ENCODE measurements at regions of chr20 and their contacts with region 1.

Region 1: DNA sequence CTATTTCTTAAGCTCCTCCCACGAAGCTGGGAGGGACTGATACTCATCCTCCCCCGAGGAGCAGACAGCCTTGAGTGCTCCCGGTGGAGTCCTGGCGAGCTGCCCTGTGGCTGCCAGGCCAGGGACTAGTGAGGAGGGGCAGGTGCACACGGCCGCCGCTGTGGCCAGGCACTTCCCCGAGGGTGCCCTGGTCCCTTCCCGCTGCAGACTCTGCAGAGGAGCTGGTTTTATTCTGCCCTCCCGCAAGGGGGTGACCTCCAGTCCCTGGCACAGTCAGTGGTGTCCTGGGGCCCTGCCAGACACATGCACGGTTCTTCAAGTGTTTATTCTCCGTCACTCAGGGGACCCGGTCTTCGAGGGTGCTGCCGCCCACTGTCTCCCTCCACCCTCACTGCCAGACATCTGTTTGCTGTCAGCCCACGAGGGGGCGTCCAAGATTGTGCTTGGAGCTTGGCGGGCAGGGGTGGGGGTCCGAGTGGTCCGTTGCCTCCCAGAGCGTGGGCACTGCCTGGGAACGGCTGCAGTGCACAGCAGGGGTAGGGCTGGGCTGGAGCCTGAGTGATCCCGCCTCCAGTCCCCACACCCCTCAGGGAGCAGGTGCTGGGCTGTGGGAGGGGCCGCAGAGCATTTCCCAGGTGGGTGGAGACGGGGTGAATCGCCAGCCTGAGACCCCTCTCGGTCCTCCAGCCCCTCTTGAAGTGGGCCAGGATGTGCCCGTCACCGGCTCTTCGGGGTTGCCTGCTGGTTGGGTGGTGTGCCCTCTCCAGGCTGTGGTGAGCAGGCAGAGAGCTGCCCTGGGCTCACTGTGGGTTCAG is 3.1 kb upstream of the CABLES2 start:
- DNase-seq: peak; percentile 92
- H3K4me3 ChIP-seq: no peak overlapping the region; a peak in 1 of 4 replicates
- H3K27ac ChIP-seq: no peak overlapping the region; a peak in 1 of 4 replicates
- H3K4me1 ChIP-seq: peaks cover 0 to 44% of the 10 kb centered on the region in 2 experiments; a peak in 1 of 4 replicates
- H3K27me3 ChIP-seq: no peaks in the 10 kb centered on the region
- CTCF ChIP-seq: peak; percentile 64
- EP300 ChIP-seq: no peak
- RAD21 ChIP-seq: peak; percentile 70

Region 2: DNA sequence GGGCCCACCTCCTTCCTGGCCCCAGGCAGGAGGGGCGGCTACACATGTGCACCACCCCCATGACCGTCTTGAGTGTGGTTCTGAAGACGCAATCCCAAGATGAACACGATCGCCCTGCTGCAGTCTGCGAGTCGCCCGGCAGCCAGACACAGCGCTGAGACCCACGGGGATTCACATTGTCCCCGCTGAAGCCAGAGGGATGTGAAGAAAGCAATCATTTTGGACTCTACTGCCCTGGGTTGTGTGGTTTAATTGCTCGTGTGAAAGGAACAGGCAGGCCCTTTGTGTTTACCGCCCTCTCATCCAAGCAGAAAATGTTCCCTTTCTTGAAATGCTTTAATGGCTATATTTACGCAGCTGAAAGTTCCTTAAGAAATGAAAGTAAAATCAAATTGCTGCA is 623.9 kb before region 1 on chr20:
- CTCF ChIA-PET with region 1: no interaction called
- POLR2A ChIA-PET with region 1: no interaction called
- DNase-seq: no peak
- H3K4me3 ChIP-seq: no peak overlapping the region
- H3K27ac ChIP-seq: no peak overlapping the region
- H3K4me1 ChIP-seq: no peaks in the 10 kb centered on the region
- H3K27me3 ChIP-seq: no peaks in the 10 kb centered on the region
- CTCF ChIP-seq: no peak
- EP300 ChIP-seq: no peak
- RAD21 ChIP-seq: no peak

Region 3: DNA sequence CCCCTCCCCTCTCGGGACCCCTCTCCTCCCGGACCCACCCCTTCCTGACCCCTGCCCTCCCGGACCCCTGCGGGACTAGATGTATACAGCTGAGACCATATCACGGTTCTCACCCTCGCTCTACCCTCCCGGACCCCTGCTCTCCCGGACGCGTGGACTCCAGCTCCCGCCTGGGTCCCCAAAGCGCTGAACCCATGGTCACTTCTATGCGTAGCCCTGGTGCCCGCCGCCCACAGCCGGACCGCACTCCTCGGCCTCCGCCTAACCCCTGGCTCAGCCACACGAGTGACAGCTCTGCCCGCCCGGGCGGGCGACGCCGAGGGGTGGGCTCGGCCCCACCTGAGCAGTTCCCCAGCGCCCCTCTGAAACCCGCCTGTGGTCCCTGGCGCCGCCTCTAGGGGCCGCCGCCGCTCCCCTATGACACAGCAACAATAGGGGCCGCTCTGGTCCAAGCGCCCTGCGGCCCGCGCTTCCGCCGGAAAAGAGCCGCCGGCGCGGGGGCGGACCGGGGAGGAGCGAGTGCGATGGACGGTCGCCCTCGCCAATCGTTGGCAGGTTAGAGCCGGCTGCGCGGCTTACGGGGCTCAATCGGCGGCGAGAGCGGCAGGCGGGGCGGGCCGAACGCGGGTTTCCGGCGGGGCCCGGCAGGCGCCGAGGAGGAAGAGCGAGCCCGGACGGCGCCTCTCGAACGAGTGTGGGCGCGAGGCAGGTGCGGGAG is 107.6 kb before region 1 on chr20 and contains the start of gene ADRM1:
- CTCF ChIA-PET with region 1: interaction called, 10 read pairs
- POLR2A ChIA-PET with region 1: no interaction called
- DNase-seq: peak; percentile 99
- H3K4me3 ChIP-seq: peak within 1 kb of the TSS; percentile 96 to 97
- H3K27ac ChIP-seq: peak within 1 kb of the TSS; percentile 80 to 94
- H3K4me1 ChIP-seq: peaks cover 7 to 26% of the 10 kb centered on the region in 2 experiments; a peak in 2 of 4 replicates
- H3K27me3 ChIP-seq: no peaks in the 10 kb centered on the region
- CTCF ChIP-seq: peak; percentile 82
- EP300 ChIP-seq: peak in 1 of 2 experiments; percentile 66; a peak in 1 of 4 replicates
- RAD21 ChIP-seq: peak; percentile 43
- polyA plus RNA-seq, gene ADRM1: 137 and 142 TPM in 2 replicates

Region 4: DNA sequence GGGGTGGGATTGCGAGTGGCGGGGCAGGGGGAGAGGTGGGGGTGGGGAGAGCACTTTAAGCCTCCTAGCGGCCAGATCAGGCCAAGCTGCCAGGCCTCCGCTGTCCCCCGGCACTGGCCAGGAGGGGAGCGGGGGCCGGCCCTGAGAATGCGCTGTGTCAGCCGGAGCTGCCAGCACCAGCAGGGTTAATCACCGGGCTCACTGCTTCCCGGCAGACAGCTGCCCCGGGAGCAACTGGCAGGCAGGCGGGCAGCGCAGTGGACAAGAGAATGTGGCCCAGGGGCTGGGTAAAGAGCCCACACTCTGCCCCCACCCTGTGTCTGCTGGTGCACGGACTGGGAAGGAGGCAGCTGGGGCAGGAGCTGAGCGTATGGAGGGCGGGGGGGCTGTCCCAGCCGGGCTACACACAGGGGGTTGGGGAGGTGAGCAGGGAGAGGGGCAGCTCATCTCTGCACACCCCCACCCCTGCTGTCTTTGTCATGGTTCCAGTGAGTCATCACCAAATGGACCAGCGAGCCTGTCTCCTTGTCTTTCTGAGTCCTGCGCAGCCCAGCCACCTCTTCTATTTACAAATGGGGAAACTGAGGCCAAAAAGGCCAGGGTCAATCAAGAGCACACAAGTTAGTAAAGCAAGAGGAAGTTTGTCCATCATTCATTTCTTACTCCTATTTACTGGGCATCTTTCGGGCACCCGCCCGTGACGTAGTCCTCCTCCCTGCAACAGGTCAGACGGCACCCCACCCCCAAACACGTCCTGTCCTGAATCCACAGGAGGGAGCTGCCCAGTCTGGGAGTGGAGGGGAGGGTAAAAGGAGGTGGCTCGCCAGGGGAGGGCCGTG is 40.9 kb before region 1 on chr20:
- CTCF ChIA-PET with region 1: interaction called, 13 read pairs
- POLR2A ChIA-PET with region 1: no interaction called
- DNase-seq: peak; percentile 89
- H3K4me3 ChIP-seq: peak overlapping the region in 1 of 2 experiments; percentile 35; a peak in 2 of 4 replicates
- H3K27ac ChIP-seq: peak overlapping the region in 1 of 2 experiments; percentile 93; a peak in 2 of 4 replicates
- H3K4me1 ChIP-seq: peaks cover 33 to 77% of the 10 kb centered on the region in 2 experiments; a peak in 3 of 4 replicates
- H3K27me3 ChIP-seq: no peaks in the 10 kb centered on the region
- CTCF ChIP-seq: peak; percentile 49
- EP300 ChIP-seq: peak in 1 of 2 experiments; percentile 16; a peak in 1 of 4 replicates
- RAD21 ChIP-seq: no peak

Region 5: GRCh38 chr20:62420951-62421715 is 11.0 kb after region 1 on chr20:
- CTCF ChIA-PET with region 1: interaction called, 16 read pairs
- POLR2A ChIA-PET with region 1: no interaction called
- DNase-seq: no peak
- H3K4me3 ChIP-seq: no peak overlapping the region
- H3K27ac ChIP-seq: no peak overlapping the region
- H3K4me1 ChIP-seq: no peaks in the 10 kb centered on the region
- H3K27me3 ChIP-seq: no peaks in the 10 kb centered on the region
- CTCF ChIP-seq: no peak
- EP300 ChIP-seq: no peak
- RAD21 ChIP-seq: no peak

Region 6: DNA sequence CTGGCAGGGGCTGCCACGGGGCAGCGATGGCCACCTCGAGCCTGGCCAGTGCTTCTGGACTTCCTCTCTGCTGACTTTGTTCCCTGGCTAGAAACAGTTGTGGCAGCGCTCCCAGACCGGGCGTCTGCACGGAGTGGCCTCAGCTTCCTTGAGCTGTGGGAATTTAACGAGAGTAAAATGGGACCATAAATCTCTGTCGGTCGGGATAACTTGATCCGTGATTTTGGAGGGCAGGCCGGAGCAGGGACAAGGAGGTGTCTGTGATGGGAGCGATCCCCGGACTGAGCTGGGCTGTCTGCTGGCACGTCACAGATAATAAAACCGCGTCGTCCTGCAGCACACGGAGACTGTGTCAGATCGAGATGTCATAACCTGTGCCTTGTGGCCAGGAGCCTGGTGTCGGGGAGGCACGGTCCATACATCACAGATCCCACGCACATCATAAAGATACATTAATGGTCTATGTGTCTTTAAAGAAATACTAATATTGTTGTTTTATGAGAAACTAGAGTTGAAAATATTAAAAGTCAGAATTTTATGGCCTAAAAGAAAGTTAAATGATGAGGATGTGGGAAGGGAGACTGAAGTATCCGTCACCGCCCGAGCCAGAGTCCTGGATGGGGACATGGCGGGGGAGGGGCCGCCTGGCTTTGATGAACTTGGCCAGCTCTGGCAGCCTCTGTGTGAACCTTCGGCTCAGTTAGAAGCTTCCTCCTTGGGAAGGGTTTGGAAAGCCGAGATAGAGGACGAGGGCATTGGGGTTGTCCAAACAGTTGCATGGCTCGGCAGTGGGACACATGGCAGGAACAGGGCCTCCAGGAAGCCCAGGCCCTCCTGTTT is 23.7 kb after region 1 on chr20:
- CTCF ChIA-PET with region 1: interaction called, 19 read pairs
- POLR2A ChIA-PET with region 1: no interaction called
- DNase-seq: no peak
- H3K4me3 ChIP-seq: no peak overlapping the region
- H3K27ac ChIP-seq: no peak overlapping the region
- H3K4me1 ChIP-seq: no peaks in the 10 kb centered on the region; a peak in 1 of 4 replicates
- H3K27me3 ChIP-seq: peaks cover 17% of the 10 kb centered on the region
- CTCF ChIP-seq: no peak
- EP300 ChIP-seq: no peak
- RAD21 ChIP-seq: no peak

Region 7: DNA sequence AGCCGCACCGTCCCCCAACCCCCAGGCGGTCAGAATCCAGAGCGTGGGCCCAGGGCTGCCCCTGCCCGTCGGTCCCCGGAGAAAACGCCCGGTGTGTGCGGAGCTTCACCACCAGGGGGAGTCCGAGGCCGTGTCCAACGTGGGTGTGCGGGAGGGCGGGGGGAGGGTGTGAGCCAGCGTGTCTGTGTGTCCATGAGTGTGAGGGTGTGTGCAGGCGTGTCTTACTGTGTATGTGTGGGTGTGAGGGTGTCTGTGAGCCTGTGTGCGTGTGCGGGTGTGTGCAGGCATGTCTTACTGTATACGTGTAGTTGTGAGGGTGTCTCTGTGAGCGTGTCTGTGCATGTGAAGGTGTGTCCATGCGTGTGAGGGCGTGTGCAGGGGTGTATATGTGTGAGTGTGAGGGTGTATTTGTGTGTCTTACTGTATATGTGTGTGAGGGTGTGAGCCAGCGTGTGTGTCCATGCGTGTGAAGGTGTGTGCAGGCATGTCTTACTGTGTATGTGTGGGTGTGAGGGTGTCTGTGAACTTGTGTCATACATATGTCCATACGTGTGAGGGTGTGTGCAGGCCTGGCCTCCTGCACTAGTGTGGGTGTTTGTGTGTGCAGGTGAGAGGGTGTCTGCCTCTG is 90.2 kb after region 1 on chr20:
- CTCF ChIA-PET with region 1: interaction called, 48 read pairs
- POLR2A ChIA-PET with region 1: no interaction called
- DNase-seq: peak; percentile 92
- H3K4me3 ChIP-seq: no peak overlapping the region
- H3K27ac ChIP-seq: no peak overlapping the region
- H3K4me1 ChIP-seq: peaks cover 0 to 11% of the 10 kb centered on the region in 2 experiments; a peak in 1 of 4 replicates
- H3K27me3 ChIP-seq: no peaks in the 10 kb centered on the region
- CTCF ChIP-seq: peak; percentile 73
- EP300 ChIP-seq: no peak
- RAD21 ChIP-seq: peak; percentile 83

Region 8: GRCh38 chr20:62523473-62524203 is 113.5 kb after region 1 on chr20:
- CTCF ChIA-PET with region 1: no interaction called
- POLR2A ChIA-PET with region 1: no interaction called
- DNase-seq: peak; percentile 60
- H3K4me3 ChIP-seq: no peak overlapping the region
- H3K27ac ChIP-seq: no peak overlapping the region
- H3K4me1 ChIP-seq: peaks cover 0 to 8% of the 10 kb centered on the region in 2 experiments; a peak in 1 of 4 replicates
- H3K27me3 ChIP-seq: no peaks in the 10 kb centered on the region
- CTCF ChIP-seq: no peak
- EP300 ChIP-seq: no peak
- RAD21 ChIP-seq: no peak

Region 9: GRCh38 chr20:62623488-62624324 is 213.6 kb after region 1 on chr20:
- CTCF ChIA-PET with region 1: interaction called, 65 read pairs
- POLR2A ChIA-PET with region 1: no interaction called
- DNase-seq: peak; percentile 93
- H3K4me3 ChIP-seq: no peak overlapping the region
- H3K27ac ChIP-seq: peak overlapping the region in 1 of 2 experiments; percentile 61; a peak in 2 of 4 replicates
- H3K4me1 ChIP-seq: peaks cover 9 to 33% of the 10 kb centered on the region in 2 experiments; a peak in 3 of 4 replicates
- H3K27me3 ChIP-seq: no peaks in the 10 kb centered on the region
- CTCF ChIP-seq: no peak
- EP300 ChIP-seq: no peak
- RAD21 ChIP-seq: no peak